ENCODE measurements at regions of chr11 and their contacts with region 1.

Region 1: GRCh38 chr11:18731949-18732821 is 6.2 kb upstream of the IGSF22 start:
- DNase-seq: peak; percentile 46
- H3K4me3 Mint-ChIP-seq: no peak overlapping the region
- H3K27ac Mint-ChIP-seq: no peak overlapping the region
- H3K4me1 Mint-ChIP-seq: no peaks in the 10 kb centered on the region
- H3K27me3 Mint-ChIP-seq: no peaks in the 10 kb centered on the region
- CTCF ChIP-seq: peak; percentile 94

Region 2: GRCh38 chr11:18540207-18541009 is 191.8 kb before region 1 on chr11:
- CTCF ChIA-PET with region 1: interaction called, 42 read pairs
- POLR2A ChIA-PET with region 1: interaction called, 3 read pairs
- intact Hi-C with region 1: loop called (anchors 1 kb)
- DNase-seq: peak; percentile 35
- H3K4me3 Mint-ChIP-seq: no peak overlapping the region
- H3K27ac Mint-ChIP-seq: no peak overlapping the region
- H3K4me1 Mint-ChIP-seq: no peaks in the 10 kb centered on the region
- H3K27me3 Mint-ChIP-seq: no peaks in the 10 kb centered on the region
- CTCF ChIP-seq: peak; percentile 46

Region 3: GRCh38 chr11:18588297-18589252 is 143.6 kb before region 1 on chr11 and contains the start of gene UEVLD:
- CTCF ChIA-PET with region 1: interaction called, 15 read pairs
- POLR2A ChIA-PET with region 1: no interaction called
- intact Hi-C with region 1: no loop called
- DNase-seq: peak; percentile 87
- H3K4me3 Mint-ChIP-seq: no peak within 1 kb of the TSS
- H3K27ac Mint-ChIP-seq: no peak within 1 kb of the TSS
- H3K4me1 Mint-ChIP-seq: no peaks in the 10 kb centered on the region
- H3K27me3 Mint-ChIP-seq: no peaks in the 10 kb centered on the region
- CTCF ChIP-seq: no peak
- total RNA-seq, gene UEVLD: 22.8 and 24.8 TPM in 2 replicates

Region 4: DNA sequence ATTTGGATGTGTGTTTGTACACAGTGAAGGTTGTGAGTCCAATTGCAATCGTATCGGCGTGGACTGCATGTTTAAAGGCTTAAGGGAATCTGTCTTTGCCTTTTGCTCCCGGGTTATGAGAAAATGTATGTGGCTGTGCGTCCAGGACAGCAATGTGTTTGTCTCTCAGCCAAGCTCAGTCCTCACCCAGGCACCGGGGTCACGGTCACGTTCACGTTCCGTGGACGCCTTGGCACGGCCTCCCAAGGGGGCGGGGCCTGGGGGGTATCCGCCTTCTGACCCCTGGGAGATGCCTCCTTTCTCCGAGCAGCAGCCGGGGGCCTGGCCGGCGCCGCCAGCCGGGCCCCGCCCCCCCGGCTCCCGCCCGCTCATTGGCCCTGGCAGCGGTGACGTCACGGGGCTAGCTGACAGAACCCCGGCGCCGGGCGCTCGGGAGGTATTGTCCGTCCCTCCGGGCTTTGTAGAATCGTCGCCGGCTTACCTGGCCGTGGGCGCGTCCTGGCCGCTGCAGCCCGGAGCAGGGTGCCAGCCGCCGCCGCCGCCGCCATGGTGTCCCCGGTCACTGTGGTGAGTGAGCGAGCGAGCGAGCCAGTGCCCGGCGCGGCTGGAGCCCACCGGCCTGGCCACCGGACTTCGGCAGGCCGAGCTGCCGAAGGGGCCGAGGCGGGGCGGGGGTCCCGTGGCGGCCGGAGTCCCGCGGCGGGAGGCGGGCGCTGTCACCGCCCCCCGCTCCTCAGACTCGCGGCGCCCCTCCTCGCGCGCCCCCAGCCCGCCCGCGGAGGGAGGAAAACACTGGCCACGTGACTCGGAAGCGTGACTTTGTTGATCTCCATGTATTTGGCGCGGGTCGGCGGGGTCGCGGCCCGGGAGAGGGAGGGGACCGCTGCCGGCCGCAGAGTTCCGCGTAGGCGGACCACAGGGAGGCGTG is 33.6 kb before region 1 on chr11 and contains the start of gene TMEM86A:
- CTCF ChIA-PET with region 1: interaction called, 10 read pairs
- POLR2A ChIA-PET with region 1: no interaction called
- intact Hi-C with region 1: no loop called
- DNase-seq: peak; percentile 78
- H3K4me3 Mint-ChIP-seq: peak within 1 kb of the TSS; percentile 69
- H3K27ac Mint-ChIP-seq: peak within 1 kb of the TSS; percentile 23
- H3K4me1 Mint-ChIP-seq: peaks cover 12% of the 10 kb centered on the region
- H3K27me3 Mint-ChIP-seq: peaks cover 17% of the 10 kb centered on the region
- CTCF ChIP-seq: no peak
- total RNA-seq, gene TMEM86A: 0.30 and 0.49 TPM in 2 replicates

Region 5: GRCh38 chr11:18721561-18722292 is 10.5 kb before region 1 on chr11:
- CTCF ChIA-PET with region 1: interaction called, 30 read pairs
- POLR2A ChIA-PET with region 1: no interaction called
- intact Hi-C with region 1: no loop called
- DNase-seq: peak; percentile 37
- H3K4me3 Mint-ChIP-seq: peak overlapping the region; percentile 64
- H3K27ac Mint-ChIP-seq: no peak overlapping the region
- H3K4me1 Mint-ChIP-seq: no peaks in the 10 kb centered on the region
- H3K27me3 Mint-ChIP-seq: peaks cover 30% of the 10 kb centered on the region
- CTCF ChIP-seq: peak; percentile 58

Region 6: DNA sequence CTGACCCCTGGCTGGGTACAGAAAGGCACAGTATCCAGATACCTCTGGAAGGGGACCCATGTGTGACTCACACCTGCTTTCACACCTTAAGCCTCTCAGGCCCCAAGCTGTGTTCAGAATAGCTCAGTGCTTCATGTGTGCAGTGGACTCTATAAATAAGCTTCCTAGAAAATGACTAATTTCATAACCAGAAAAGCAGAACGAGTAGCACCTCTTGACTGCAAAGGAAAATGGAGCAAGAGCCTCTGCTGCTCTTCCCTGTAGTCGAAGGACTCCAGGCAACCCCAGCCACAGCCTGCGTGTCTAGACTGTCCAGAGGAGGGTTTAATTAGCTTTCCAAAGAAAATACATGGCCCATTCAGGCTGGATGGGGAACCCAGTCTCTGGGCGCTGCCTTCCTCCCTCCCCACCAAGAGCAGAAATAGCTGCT is 36.3 kb after region 1 on chr11:
- CTCF ChIA-PET with region 1: interaction called, 29 read pairs
- POLR2A ChIA-PET with region 1: no interaction called
- intact Hi-C with region 1: loop called (anchors 2 kb)
- DNase-seq: no peak
- H3K4me3 Mint-ChIP-seq: no peak overlapping the region
- H3K27ac Mint-ChIP-seq: no peak overlapping the region
- H3K4me1 Mint-ChIP-seq: peaks cover 13% of the 10 kb centered on the region
- H3K27me3 Mint-ChIP-seq: peaks cover 28% of the 10 kb centered on the region
- CTCF ChIP-seq: no peak

Measured in MCF 10A (cell line).